Endothelial cell of umbilical vein (primary cell): ENCODE measurements at regions of chr7 and their contacts with region 1.

Region 1: GRCh38 chr7:80392229-80393169 is 119.4 kb downstream of the GNAT3 start:
- DNase-seq: peak; percentile 57
- H3K4me3 ChIP-seq: no peak overlapping the region
- H3K27ac ChIP-seq: no peak overlapping the region
- H3K4me1 ChIP-seq: no peaks in the 10 kb centered on the region
- H3K27me3 ChIP-seq: no peaks in the 10 kb centered on the region
- CTCF ChIP-seq: peak; percentile 7 to 8
- POLR2A ChIP-seq: no peak

Region 2: DNA sequence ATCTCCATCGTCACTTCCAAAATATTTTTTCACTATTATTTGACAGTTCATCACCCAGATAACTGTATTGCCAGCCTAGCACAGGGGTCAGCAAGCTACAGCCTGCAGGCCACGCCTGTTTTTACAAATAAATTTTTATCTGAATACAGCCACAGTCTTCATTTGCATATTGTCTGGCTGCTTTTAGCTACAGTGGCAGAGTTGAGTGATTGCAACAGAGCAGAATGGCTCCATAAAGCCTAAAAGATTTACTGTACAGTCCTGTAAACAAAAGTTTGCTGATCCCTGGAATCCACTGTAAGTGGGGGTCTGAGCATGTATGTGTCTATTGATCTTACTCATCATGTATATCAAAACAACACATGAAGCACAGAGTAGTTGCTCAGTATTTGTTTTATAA is 303.8 kb before region 1 on chr7:
- CTCF ChIA-PET with region 1: interaction called, 61 read pairs
- POLR2A ChIA-PET with region 1: no interaction called
- dilution Hi-C with region 1: no loop called
- intact Hi-C with region 1: no loop called
- DNase-seq: no peak
- H3K4me3 ChIP-seq: no peak overlapping the region
- H3K27ac ChIP-seq: no peak overlapping the region
- H3K4me1 ChIP-seq: no peaks in the 10 kb centered on the region
- H3K27me3 ChIP-seq: no peaks in the 10 kb centered on the region
- CTCF ChIP-seq: no peak
- POLR2A ChIP-seq: no peak

Region 3: GRCh38 chr7:80127412-80128150 is 264.9 kb before region 1 on chr7:
- CTCF ChIA-PET with region 1: interaction called, 10 read pairs
- POLR2A ChIA-PET with region 1: no interaction called
- dilution Hi-C with region 1: no loop called
- intact Hi-C with region 1: no loop called
- DNase-seq: no peak
- H3K4me3 ChIP-seq: no peak overlapping the region
- H3K27ac ChIP-seq: no peak overlapping the region
- H3K4me1 ChIP-seq: no peaks in the 10 kb centered on the region
- H3K27me3 ChIP-seq: peaks cover 2 to 4% of the 10 kb centered on the region in 2 experiments
- CTCF ChIP-seq: no peak
- POLR2A ChIP-seq: no peak

Region 4: DNA sequence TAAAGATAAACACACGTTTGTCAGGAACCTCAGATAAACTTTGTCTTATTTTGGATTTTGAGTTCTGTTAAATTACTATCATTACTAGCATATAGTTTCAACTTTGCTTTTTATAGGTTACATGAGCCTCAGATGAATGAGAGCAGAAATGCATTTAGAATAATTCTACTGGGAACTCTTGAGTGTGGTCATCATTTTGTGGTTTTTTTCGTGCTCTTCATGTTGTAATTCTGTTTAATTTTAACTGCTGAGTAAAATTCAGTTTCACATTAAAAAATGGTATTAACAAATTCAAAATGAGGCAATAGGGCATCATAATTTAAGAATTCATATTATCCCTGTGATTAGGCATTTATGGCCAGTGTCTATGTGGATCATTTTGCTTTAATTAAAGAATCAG is 185.0 kb before region 1 on chr7:
- CTCF ChIA-PET with region 1: interaction called, 11 read pairs
- POLR2A ChIA-PET with region 1: no interaction called
- dilution Hi-C with region 1: no loop called
- intact Hi-C with region 1: no loop called
- DNase-seq: no peak
- H3K4me3 ChIP-seq: no peak overlapping the region
- H3K27ac ChIP-seq: no peak overlapping the region
- H3K4me1 ChIP-seq: no peaks in the 10 kb centered on the region
- H3K27me3 ChIP-seq: no peaks in the 10 kb centered on the region
- CTCF ChIP-seq: no peak
- POLR2A ChIP-seq: no peak

Region 5: DNA sequence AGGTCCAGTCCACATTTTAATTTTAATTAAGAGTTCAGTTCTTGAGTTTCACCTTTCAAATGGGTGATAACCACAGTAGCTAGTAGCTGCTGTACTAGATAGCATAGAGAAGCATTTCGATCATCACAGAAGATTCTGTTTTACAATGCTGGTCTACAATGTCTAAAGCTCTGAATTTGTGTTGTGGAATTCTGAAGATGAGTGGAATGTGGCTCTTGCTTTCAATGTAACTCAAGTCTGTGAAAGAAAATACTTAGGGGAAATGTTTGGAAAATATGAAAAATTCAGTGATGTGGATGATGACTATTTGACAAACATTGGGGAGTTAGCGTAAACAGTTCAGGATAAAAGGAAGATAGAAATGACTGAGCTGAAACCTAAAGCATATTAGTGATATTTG is 20.1 kb before region 1 on chr7:
- CTCF ChIA-PET with region 1: interaction called, 34 read pairs
- POLR2A ChIA-PET with region 1: no interaction called
- dilution Hi-C with region 1: no loop called
- intact Hi-C with region 1: no loop called
- DNase-seq: no peak
- H3K4me3 ChIP-seq: no peak overlapping the region
- H3K27ac ChIP-seq: no peak overlapping the region
- H3K4me1 ChIP-seq: peaks cover 5% of the 10 kb centered on the region
- H3K27me3 ChIP-seq: no peaks in the 10 kb centered on the region
- CTCF ChIP-seq: no peak
- POLR2A ChIP-seq: no peak

Region 6: DNA sequence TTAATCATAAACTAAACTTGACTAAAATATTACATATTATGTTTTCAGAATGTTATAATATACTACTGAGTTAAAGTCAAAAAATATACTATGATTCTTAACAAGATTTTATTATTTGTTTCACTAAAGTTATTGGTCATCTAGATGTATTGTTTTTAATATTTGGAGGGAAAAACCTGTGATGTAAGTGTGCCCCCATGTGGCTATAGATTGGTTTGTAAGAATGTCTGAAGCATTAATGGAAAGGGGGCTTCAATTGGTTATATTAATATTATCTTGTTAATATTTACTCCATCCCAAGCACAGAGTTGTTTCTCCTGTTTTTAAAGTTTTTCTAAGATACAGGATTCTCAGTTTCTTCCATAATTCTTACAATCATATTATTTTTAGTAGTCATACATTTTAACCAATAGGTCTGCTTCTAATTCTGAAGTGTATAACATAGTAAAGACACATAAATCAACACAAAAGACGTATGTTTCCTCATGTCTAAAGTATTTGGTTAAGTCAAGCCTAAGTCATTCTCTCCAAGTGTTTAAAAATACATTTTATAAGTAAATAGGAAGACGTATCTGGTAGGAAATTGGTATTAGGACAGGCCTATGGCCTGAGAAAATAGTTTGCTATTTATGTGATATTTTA is 61.3 kb after region 1 on chr7:
- CTCF ChIA-PET with region 1: interaction called, 3 read pairs
- POLR2A ChIA-PET with region 1: no interaction called
- dilution Hi-C with region 1: no loop called
- intact Hi-C with region 1: loop called (anchors 2 kb)
- DNase-seq: peak; percentile 59
- H3K4me3 ChIP-seq: no peak overlapping the region
- H3K27ac ChIP-seq: no peak overlapping the region
- H3K4me1 ChIP-seq: no peaks in the 10 kb centered on the region
- H3K27me3 ChIP-seq: no peaks in the 10 kb centered on the region
- CTCF ChIP-seq: peak in 1 of 2 donors; percentile 29
- POLR2A ChIP-seq: no peak

Region 7: GRCh38 chr7:80583901-80584300 is 191.4 kb after region 1 on chr7:
- CTCF ChIA-PET with region 1: no interaction called
- POLR2A ChIA-PET with region 1: no interaction called
- dilution Hi-C with region 1: no loop called
- intact Hi-C with region 1: no loop called
- DNase-seq: no peak
- H3K4me3 ChIP-seq: no peak overlapping the region
- H3K27ac ChIP-seq: no peak overlapping the region
- H3K4me1 ChIP-seq: no peaks in the 10 kb centered on the region
- H3K27me3 ChIP-seq: no peaks in the 10 kb centered on the region
- CTCF ChIP-seq: no peak
- POLR2A ChIP-seq: no peak